ENCODE measurements at regions of chr15 and their contacts with region 1.

Region 1: DNA sequence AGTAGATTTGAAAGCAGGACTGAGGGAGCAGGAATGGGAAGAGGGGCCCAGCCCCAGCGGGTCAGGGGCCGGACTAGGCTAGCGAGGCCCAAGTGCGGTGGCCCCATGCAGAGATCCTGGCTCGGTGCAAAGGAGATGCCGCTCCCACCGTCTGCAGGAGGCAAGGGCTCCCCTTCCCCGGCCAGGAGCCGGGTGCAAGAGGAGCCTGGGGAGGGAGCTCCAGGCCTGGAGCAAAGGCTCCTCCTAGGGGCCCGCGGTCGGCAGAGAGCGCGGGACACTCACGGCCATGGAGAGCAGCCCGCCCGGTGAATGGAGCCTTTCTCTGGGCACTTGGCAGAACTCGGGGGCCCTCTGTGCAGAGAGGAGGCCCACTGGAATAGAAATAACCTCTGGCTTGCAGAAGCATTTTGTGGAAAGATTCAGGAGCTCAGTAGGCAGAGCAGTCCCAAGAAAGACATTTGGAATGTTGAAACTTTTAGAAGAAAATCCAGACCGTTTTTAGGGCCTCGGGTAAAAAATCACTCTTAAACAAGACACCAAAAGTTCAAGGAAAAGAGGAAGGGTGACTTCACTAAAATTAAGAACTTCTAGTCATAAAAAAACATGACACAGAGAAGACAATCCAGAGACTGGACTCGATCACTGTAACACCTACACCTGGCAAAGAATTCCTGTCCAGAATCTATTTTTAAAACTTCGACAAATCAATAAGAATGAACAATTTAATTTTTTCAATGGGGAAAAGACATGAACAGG is 43.0 kb upstream of the USP3 start:
- DNase-seq: peak; percentile 72
- H3K4me3 Mint-ChIP-seq: peak overlapping the region; percentile 81
- H3K27ac Mint-ChIP-seq: peak overlapping the region; percentile 98
- H3K4me1 Mint-ChIP-seq: peaks cover 61% of the 10 kb centered on the region
- H3K27me3 Mint-ChIP-seq: no peaks in the 10 kb centered on the region
- CTCF ChIP-seq: peak; percentile 19

Region 2: GRCh38 chr15:63288778-63289378 is 172.5 kb before region 1 on chr15:
- CTCF ChIA-PET with region 1: interaction called, 9 read pairs
- intact Hi-C with region 1: loop called (anchors 2 kb)
- DNase-seq: peak; percentile 30
- H3K4me3 Mint-ChIP-seq: no peak overlapping the region
- H3K27ac Mint-ChIP-seq: no peak overlapping the region
- H3K4me1 Mint-ChIP-seq: peaks cover 9% of the 10 kb centered on the region
- H3K27me3 Mint-ChIP-seq: no peaks in the 10 kb centered on the region
- CTCF ChIP-seq: peak; percentile 55

Region 3: GRCh38 chr15:63411866-63412265 is 49.5 kb before region 1 on chr15:
- CTCF ChIA-PET with region 1: no interaction called
- intact Hi-C with region 1: no loop called
- DNase-seq: no peak
- H3K4me3 Mint-ChIP-seq: no peak overlapping the region
- H3K27ac Mint-ChIP-seq: no peak overlapping the region
- H3K4me1 Mint-ChIP-seq: peaks cover 7% of the 10 kb centered on the region
- H3K27me3 Mint-ChIP-seq: no peaks in the 10 kb centered on the region
- CTCF ChIP-seq: no peak

Measured in Calu3 (cell line).